OCI-LY7 (cell line): ENCODE measurements at regions of chr15 and their contacts with region 1.

Region 1: DNA sequence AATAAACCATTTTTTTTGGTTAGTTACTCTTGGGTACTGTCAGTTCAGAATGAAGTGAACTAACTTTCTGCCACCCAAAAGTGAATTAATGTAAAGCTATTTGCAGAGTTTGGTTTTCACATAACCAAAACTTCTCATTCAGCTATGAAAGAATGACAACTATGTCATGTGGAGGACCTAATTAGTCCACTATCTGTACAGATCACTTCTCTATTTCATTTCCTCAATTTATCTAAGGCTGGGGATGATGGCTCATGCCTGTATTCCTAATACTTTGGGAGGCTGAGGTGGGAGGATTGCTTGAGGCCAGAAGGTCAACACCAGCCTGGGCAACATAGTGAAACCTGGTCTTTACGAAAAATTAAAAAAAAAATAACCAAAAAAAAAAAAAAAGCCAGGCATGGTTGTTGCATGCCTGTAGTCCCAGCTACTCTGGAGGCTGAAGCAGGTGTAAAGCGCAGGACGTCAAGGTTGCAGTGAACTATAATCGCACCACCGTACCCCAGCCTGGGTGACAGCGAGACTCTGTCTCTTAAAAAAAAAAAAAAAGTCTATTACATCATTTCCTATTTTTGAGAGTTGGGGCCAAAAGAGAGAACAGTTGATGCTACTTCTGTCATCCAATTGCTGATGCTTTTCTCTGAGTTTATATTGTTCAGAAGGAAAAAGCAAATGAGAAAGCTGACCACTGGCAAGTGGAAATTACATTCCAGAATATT is 8.7 kb downstream of the HYPK start:
- DNase-seq: peak; percentile 86
- H3K4me3 ChIP-seq: peak overlapping the region; percentile 46
- H3K27ac ChIP-seq: peak overlapping the region; percentile 96
- H3K4me1 ChIP-seq: peaks cover 38% of the 10 kb centered on the region
- CTCF ChIP-seq: no peak

Region 2: DNA sequence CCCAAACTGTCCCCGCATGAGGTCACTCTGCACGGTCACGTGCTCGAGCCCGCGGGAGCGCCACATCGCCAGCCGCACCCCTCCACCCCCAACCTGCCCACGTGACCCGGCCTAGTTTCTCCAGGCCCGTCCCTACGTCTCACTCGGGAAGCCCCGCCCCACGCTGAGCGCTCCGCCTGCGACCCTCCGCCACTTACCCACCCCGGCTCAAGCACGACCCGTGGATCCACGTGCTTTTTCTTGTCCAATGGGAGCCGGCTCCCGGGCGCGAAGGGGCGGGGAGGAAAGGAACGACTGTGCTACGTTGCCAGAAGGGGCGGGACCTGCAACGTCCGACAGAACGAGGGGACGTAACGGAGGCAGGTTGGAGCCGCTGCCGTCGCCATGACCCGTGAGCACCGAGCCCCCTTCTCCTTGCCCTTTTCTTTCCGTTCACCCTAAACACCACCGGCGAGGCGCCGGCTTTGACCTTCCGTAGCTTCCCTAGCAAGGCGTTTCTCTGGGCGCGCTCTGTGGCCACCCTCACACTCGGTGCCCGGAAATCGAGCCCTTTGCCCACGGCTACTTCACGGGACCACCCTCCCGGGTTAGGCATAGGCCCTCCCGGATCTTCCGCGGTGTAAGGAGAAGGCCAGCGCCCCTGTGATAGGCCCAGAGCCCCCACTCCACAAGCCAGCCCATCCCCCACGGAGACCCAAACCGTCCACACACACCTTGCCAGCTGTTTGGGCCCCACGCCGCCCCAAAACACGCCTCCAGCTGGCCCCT is 16.9 kb before region 1 on chr15 and contains the start of gene SERF2:
- CTCF ChIA-PET with region 1: interaction called, 6 read pairs
- POLR2A ChIA-PET with region 1: interaction called, 14 read pairs
- intact Hi-C with region 1: loop called (anchors 1 kb)
- DNase-seq: peak; percentile 99
- H3K4me3 ChIP-seq: peak within 1 kb of the TSS; percentile 97
- H3K27ac ChIP-seq: peak within 1 kb of the TSS; percentile 100
- H3K4me1 ChIP-seq: peaks cover 87% of the 10 kb centered on the region
- CTCF ChIP-seq: no peak
- total RNA-seq, gene SERF2: 581 and 622 TPM in 2 replicates

Region 3: GRCh38 chr15:43824302-43825246 is 15.5 kb after region 1 on chr15 and contains the start of gene MFAP1:
- CTCF ChIA-PET with region 1: interaction called, 3 read pairs
- POLR2A ChIA-PET with region 1: interaction called, 150 read pairs
- intact Hi-C with region 1: loop called (anchors 1 kb)
- DNase-seq: peak; percentile 99
- H3K4me3 ChIP-seq: peak within 1 kb of the TSS; percentile 94
- H3K27ac ChIP-seq: peak within 1 kb of the TSS; percentile 86
- H3K4me1 ChIP-seq: peaks cover 43% of the 10 kb centered on the region
- CTCF ChIP-seq: no peak
- total RNA-seq, gene MFAP1: 25.3 and 43.4 TPM in 2 replicates

Region 4: GRCh38 chr15:44536302-44536961 is 727.3 kb after region 1 on chr15:
- CTCF ChIA-PET with region 1: no interaction called
- POLR2A ChIA-PET with region 1: no interaction called
- intact Hi-C with region 1: no loop called
- DNase-seq: no peak
- H3K4me3 ChIP-seq: peak overlapping the region; percentile 83
- H3K27ac ChIP-seq: peak overlapping the region; percentile 56
- H3K4me1 ChIP-seq: peaks cover 14% of the 10 kb centered on the region
- CTCF ChIP-seq: peak; percentile 35